ENCODE measurements at regions of chr2 and their contacts with region 1.

Region 1: GRCh38 chr2:54704688-54705605 is 18.5 kb upstream of the EML6 start:
- DNase-seq: no peak
- H3K4me3 Mint-ChIP-seq: no peak overlapping the region
- H3K27ac Mint-ChIP-seq: no peak overlapping the region
- H3K4me1 Mint-ChIP-seq: peaks cover 13% of the 10 kb centered on the region
- H3K27me3 Mint-ChIP-seq: peaks cover 24% of the 10 kb centered on the region

Region 2: DNA sequence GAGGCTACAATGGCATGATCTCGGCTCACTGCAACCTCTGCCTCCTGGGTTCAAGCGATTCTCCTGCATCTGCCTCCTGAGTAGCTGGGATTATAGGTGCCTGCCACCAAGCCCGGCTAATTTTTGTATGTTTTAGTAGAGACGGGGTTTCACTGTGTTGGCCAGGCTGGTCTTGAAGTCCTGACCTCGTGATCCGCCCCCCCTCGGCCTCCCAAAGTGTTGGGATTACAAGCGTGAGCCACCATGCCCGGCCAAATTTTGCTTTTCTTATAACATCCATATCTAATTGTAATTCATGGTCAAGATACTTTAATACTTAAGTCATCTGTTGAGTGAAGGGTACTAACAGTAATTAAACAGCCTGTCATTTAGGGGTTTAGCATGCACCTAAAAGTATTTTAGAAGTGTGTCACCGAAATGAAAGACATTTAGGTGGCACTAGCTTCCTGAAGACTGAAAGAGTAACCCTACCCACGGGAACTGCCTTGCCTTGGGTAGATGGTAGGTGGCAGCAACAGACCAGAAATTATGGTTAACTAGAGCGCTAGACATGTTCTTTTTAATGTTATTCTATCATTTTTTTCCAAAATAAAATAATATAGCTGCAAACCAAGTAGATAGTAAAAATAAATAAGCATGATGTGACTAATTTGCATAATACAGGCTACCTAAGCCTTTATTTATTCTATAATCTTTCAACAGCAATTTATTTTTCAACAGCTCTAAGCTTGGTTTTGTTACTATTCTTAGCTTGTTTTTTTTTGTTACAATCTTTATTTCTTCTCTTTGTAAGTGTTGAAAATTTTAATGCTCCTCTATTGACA is 598.1 kb before region 1 on chr2:
- CTCF ChIA-PET with region 1: interaction called, 14 read pairs
- DNase-seq: peak; percentile 56
- H3K4me3 Mint-ChIP-seq: no peak overlapping the region
- H3K27ac Mint-ChIP-seq: no peak overlapping the region
- H3K4me1 Mint-ChIP-seq: peaks cover 9% of the 10 kb centered on the region
- H3K27me3 Mint-ChIP-seq: peaks cover 17% of the 10 kb centered on the region

Region 3: GRCh38 chr2:54657664-54658083 is 47.3 kb before region 1 on chr2:
- CTCF ChIA-PET with region 1: interaction called, 90 read pairs
- DNase-seq: peak; percentile 48
- H3K4me3 Mint-ChIP-seq: no peak overlapping the region
- H3K27ac Mint-ChIP-seq: no peak overlapping the region
- H3K4me1 Mint-ChIP-seq: peaks cover 14% of the 10 kb centered on the region
- H3K27me3 Mint-ChIP-seq: no peaks in the 10 kb centered on the region

Region 4: DNA sequence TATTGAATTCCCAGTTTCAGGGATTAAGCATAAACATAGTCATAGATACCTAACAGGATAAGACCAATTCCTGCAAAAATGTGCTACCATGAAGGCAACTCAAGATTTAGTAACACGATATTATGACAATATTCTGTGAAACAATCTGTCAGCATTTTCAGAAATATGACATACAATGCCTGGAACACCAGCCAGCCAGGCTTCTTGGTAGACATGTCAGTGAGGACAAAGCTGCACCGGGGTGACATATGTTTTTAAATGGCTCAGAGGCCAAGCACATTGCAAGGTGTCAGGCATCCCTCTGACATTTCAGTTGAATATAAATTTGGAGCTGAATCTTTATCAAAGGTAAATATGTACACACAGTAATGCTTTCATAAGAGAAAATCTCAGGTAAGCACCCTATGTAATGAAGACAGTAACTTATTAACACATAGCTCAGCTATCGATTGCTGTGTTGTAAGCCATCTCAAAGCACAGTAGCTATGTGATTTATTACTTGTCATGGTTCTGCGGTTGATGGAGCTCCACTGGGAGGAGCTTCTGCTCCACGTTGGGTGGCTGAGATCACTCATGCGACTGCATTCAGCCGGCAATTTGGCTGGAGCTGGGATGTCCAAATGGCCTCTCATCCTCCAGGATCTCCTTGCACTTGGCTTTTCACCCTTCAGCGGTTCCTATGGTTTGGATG is 13.4 kb before region 1 on chr2:
- CTCF ChIA-PET with region 1: interaction called, 15 read pairs
- DNase-seq: no peak
- H3K4me3 Mint-ChIP-seq: no peak overlapping the region
- H3K27ac Mint-ChIP-seq: no peak overlapping the region
- H3K4me1 Mint-ChIP-seq: peaks cover 10% of the 10 kb centered on the region
- H3K27me3 Mint-ChIP-seq: peaks cover 18% of the 10 kb centered on the region